GM10248 (cell line): ENCODE measurements at regions of chr14 and their contacts with region 1.

Region 1: DNA sequence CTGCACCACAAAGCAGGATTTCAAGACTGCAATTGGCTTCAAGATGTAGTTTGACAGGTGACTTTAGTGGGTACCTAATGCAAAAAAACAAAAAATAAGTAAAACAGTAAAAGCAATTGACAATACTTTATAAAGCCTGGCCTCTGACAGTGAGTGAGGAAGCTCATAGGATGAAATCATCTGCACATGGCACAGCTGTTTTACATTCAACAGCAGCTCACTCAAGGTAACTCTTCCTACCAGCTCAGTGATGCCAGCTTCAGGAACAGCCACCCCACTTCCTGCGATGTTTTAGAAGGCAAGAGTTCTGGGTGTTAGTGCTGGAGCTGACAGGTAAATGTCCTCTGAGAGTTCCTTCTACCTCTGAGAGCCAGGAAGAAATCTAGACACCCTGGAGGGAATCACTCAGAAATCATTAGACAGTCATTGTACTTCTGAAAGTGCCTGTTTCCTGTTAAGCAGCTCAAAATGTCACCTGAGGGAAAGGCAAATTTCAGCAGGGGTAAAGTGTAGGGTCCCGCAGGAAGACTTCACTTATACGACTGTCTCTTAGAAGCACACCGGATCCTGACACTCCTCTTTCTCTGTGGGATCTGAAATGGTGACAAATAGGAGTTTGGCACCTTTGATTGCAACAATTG is 99.9 kb downstream of the FOXN3 start:
- DNase-seq: peak; percentile 39
- CTCF ChIP-seq: no peak

Region 2: GRCh38 chr14:89293314-89293916 is 23.8 kb before region 1 on chr14:
- CTCF ChIA-PET with region 1: no interaction called
- POLR2A ChIA-PET with region 1: no interaction called
- DNase-seq: no peak
- CTCF ChIP-seq: no peak

Region 3: GRCh38 chr14:89304972-89305703 is 12.0 kb before region 1 on chr14:
- CTCF ChIA-PET with region 1: interaction called, 12 read pairs
- POLR2A ChIA-PET with region 1: interaction called, 3 read pairs
- DNase-seq: peak; percentile 59
- CTCF ChIP-seq: no peak

Region 4: GRCh38 chr14:89330236-89331002 is 13.2 kb after region 1 on chr14:
- CTCF ChIA-PET with region 1: interaction called, 12 read pairs
- POLR2A ChIA-PET with region 1: no interaction called
- DNase-seq: no peak
- CTCF ChIP-seq: no peak